Endothelial cell of umbilical vein (primary cell): ENCODE measurements at regions of chr12 and their contacts with region 1.

Region 1: GRCh38 chr12:75977952-75978671 is 53.5 kb downstream of the PHLDA1 start:
- DNase-seq: peak; percentile 100
- H3K4me3 ChIP-seq: no peak overlapping the region
- H3K27ac ChIP-seq: peak overlapping the region; percentile 96
- H3K4me1 ChIP-seq: peaks cover 44% of the 10 kb centered on the region
- H3K27me3 ChIP-seq: no peaks in the 10 kb centered on the region
- CTCF ChIP-seq: peak in 1 of 2 donors; percentile 11
- POLR2A ChIP-seq: no peak

Region 2: DNA sequence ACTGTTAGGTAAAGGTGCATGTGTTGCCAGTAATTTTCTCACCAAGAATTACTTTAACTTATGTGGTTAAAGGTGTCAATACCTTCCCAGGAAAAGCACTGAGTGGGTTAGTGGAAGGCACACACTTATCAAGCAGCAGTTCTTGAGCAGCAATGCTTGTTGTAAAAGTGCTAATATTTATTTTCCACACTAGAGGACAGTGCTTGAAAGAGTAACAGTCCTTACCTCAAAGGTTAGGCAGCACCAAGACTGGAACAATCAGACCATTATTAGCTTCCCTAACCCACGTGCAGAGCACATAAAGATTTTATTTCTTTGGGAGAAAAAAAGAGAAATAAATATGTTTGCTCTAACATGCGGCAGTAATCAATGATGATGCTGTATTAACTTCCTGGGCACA is 417.9 kb before region 1 on chr12:
- CTCF ChIA-PET with region 1: interaction called, 3 read pairs
- POLR2A ChIA-PET with region 1: no interaction called
- dilution Hi-C with region 1: no loop called
- intact Hi-C with region 1: loop called (anchors 5 kb)
- DNase-seq: peak; percentile 70
- H3K4me3 ChIP-seq: no peak overlapping the region
- H3K27ac ChIP-seq: no peak overlapping the region
- H3K4me1 ChIP-seq: peaks cover 12% of the 10 kb centered on the region
- H3K27me3 ChIP-seq: no peaks in the 10 kb centered on the region
- CTCF ChIP-seq: peak in 1 of 2 donors; percentile 40
- POLR2A ChIP-seq: no peak

Region 3: DNA sequence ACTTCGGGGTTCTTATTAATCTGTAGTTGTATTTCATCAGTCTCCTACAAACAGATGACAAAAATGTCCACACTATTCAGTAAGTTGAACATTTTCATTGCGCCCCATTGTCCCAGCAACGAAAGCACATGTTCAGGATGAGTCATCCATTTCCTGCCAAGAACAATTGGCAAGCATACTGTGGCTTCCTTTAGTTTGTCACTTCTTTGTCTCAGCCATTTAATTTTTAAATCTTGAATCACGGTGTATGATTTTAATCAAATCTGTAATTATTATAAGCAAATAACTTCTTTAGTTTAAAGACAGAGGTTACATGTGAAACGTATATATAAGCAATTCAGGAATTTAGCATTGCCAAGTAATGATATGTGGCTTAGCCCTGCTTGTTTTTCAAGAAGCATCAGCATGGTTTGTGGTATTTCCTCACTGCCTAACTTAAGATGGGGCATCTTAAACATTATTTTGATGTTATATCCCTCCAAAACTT is 255.4 kb before region 1 on chr12:
- CTCF ChIA-PET with region 1: no interaction called
- POLR2A ChIA-PET with region 1: no interaction called
- dilution Hi-C with region 1: no loop called
- intact Hi-C with region 1: loop called (anchors 1 kb)
- DNase-seq: peak; percentile 95
- H3K4me3 ChIP-seq: no peak overlapping the region
- H3K27ac ChIP-seq: peak overlapping the region; percentile 92
- H3K4me1 ChIP-seq: peaks cover 46% of the 10 kb centered on the region
- H3K27me3 ChIP-seq: no peaks in the 10 kb centered on the region
- CTCF ChIP-seq: no peak
- POLR2A ChIP-seq: no peak

Region 4: DNA sequence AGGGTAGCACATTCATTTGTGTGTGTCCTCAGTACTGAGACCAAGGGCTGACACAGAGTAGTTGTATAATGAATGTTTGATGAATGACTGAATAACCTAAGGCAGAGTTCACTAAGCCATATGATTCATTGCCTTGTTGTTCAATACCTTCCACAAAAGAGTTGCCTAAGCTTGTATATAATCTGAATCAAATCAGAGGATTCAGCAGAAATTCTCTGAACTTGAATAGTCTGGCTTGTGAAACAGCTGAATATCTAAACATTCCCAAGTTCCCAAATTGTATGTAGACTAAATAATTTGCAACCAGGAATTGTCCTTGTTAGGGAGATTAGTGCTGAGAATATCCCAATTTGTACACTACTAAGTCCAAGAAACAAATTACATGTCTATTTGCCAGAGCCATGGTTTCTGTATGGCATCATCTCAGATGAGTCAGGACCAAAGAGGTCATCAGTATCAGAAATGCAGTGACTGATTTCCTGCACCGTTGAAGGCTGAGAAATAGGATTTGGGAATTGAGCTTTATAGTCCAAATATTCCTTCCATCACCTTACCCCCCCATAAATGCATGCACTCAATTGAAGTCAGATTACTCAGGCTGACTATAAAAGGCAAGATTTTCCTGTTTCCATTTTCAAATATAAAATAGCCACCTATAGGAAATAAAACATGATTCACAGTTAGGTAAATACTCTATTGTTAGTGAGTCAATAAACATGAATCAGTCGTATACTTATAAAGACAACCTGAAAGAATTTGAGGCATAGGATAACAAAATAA is 115.2 kb before region 1 on chr12:
- CTCF ChIA-PET with region 1: no interaction called
- POLR2A ChIA-PET with region 1: no interaction called
- dilution Hi-C with region 1: no loop called
- intact Hi-C with region 1: loop called (anchors 1 kb)
- DNase-seq: peak; percentile 84
- H3K4me3 ChIP-seq: no peak overlapping the region
- H3K27ac ChIP-seq: peak overlapping the region; percentile 76
- H3K4me1 ChIP-seq: peaks cover 38% of the 10 kb centered on the region
- H3K27me3 ChIP-seq: no peaks in the 10 kb centered on the region
- CTCF ChIP-seq: no peak
- POLR2A ChIP-seq: no peak

Region 5: DNA sequence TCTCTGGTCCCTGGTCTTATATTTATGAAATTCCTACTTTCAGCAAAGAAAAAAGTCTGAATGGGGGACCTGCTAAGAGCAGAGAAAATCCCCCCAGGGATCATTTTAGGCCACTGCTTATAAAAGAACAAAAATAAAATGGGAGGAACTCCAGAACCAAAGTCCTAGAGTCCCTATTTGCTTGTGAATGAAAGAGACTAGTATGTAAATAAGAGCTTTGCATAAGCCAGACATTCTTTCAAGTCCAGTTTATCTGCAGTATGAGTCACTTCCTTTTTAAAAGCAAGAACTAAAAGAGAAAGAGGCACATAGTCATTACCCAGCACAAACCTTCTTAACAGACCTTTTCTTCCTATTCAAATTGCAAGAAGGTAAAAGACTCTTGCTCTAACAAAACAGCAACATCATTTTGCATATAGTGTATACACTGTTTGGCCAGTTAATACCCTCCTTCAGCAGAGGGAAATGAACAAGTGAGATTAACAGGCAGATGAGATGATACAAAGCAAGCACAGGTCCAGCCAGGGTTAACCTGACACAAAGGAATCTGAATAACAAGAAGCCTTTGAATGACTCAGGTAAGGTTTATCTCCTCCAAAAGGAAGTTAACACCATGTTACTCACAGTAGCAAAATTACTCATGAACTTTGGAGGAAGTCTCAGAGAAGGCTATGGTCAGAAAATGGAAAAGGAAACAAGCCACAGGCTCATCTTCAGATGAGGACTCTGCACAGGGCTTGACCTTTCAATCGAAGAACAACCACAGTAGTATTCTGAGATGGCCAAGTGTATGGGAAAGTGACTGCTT is 33.8 kb before region 1 on chr12:
- CTCF ChIA-PET with region 1: interaction called, 3 read pairs
- POLR2A ChIA-PET with region 1: no interaction called
- dilution Hi-C with region 1: no loop called
- intact Hi-C with region 1: loop called (anchors 1 kb)
- DNase-seq: peak; percentile 86
- H3K4me3 ChIP-seq: no peak overlapping the region
- H3K27ac ChIP-seq: peak overlapping the region; percentile 94
- H3K4me1 ChIP-seq: peaks cover 23% of the 10 kb centered on the region
- H3K27me3 ChIP-seq: no peaks in the 10 kb centered on the region
- CTCF ChIP-seq: no peak
- POLR2A ChIP-seq: peak; percentile 54

Region 6: DNA sequence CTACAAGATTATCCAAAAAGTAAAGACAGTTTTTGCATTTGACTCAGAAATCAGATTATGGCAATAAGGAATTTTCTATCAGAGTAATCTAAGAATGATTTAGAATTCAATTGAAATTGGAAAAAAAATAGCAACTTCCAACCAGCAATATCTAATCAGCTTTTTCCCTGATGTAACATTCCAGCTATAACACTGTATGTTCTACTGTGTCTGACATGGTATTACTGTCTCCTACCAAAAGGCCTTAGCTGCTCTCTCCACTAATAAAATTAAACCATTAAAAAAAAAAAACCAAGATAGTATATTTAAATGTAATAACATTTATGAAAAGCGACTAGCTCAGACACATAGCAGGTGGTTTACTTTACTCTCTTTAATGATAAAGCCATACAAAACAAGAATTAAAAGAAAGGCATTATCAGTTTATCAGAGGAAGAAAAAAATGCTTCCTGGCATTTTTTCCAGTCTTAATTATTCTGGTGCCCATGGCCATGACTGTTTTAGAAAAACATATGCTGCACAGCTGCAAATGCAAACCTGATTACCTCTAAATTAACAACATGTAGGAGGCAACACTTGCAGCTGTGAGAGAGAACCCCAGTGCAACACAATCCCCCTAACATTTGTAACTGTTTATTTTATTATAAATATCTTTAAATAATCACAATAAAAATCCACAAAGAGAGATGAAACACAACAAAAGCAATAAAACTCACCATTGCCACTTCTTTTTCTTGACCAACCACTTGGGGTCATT is 24.7 kb after region 1 on chr12:
- CTCF ChIA-PET with region 1: no interaction called
- POLR2A ChIA-PET with region 1: interaction called, 3 read pairs
- dilution Hi-C with region 1: no loop called
- intact Hi-C with region 1: loop called (anchors 1 kb)
- DNase-seq: peak; percentile 42
- H3K4me3 ChIP-seq: no peak overlapping the region
- H3K27ac ChIP-seq: no peak overlapping the region
- H3K4me1 ChIP-seq: peaks cover 24% of the 10 kb centered on the region
- H3K27me3 ChIP-seq: no peaks in the 10 kb centered on the region
- CTCF ChIP-seq: no peak
- POLR2A ChIP-seq: no peak

Region 7: DNA sequence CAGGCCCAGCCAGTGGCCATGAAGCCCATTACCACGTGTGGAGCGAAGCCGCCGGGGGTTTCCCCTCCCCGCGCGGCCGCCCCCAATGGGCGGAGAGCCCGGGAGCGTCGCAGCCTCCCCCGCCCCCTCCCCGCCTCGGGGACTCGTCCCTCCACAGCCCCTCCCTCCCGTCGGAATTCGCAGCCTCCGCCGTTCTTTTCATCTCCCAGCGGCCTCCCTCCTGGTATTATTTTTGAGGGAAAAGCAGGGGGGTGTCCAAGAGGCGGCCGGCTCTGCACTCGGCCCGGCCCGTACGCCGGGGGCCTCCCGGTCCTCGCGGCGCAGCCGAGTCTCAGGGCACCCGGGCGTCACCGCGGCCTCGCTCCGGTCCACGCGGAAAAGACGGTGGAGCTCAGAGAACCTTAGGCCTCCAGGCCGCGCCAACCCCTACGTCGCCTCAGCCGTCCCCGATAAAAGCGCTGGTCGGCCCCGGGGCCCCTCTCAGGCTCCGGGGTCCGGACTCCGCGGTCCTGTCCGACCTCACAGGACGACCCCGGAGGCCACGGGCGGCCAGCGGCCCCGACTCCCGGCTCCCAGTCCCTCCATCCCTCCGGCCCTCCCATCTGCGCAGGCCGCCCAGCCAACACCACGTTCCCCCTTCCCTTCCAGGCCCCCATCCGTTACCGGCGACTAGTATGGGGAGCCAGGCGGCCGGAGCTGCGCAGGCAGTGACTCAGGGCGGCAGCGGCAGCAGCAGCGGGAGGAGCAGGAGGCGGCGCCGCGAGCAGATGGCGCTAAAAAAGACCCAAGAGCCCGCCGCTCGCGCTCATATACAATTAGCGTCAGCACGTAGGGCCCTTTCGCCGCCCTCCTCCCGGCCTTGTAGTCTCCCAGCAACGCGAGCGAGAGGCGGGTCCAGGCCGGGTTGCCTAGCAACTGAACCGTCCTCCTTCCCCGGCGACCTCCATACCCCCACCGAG is 106.1 kb after region 1 on chr12 and contains the start of gene NAP1L1:
- CTCF ChIA-PET with region 1: no interaction called
- POLR2A ChIA-PET with region 1: no interaction called
- dilution Hi-C with region 1: no loop called
- intact Hi-C with region 1: loop called (anchors 2 kb)
- DNase-seq: peak; percentile 97
- H3K4me3 ChIP-seq: peak within 1 kb of the TSS; percentile 76 to 99 (median 93)
- H3K27ac ChIP-seq: peak within 1 kb of the TSS; percentile 92
- H3K4me1 ChIP-seq: peaks cover 38% of the 10 kb centered on the region
- H3K27me3 ChIP-seq: no peaks in the 10 kb centered on the region
- CTCF ChIP-seq: peak in 1 of 2 donors; percentile 7
- POLR2A ChIP-seq: peak; percentile 87
- total RNA-seq, gene NAP1L1: 649 and 665 TPM in 2 replicates

Region 8: DNA sequence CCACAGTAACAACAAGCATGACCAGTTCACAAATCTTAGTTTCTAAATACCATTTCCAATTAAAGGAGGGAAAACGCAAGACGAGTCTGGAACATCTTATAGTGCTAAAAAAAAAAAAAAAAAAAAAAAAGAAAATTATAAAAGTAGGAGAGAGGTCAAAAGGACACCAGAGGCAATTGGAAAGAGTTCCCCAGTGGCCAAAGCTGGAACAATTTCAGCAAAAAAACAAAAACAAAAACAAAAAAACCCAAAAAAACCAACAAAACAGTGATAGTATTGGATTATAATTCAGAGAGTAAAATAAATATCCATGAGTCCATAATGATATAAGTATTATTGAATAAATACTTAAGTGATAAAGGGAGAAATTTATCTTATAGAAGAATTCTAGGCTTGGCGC is 116.6 kb after region 1 on chr12:
- CTCF ChIA-PET with region 1: no interaction called
- POLR2A ChIA-PET with region 1: no interaction called
- dilution Hi-C with region 1: no loop called
- intact Hi-C with region 1: no loop called
- DNase-seq: no peak
- H3K4me3 ChIP-seq: no peak overlapping the region
- H3K27ac ChIP-seq: no peak overlapping the region
- H3K4me1 ChIP-seq: no peaks in the 10 kb centered on the region
- H3K27me3 ChIP-seq: no peaks in the 10 kb centered on the region
- CTCF ChIP-seq: no peak
- POLR2A ChIP-seq: no peak